ENCODE measurements at regions of chr16 and their contacts with region 1.

Region 1: DNA sequence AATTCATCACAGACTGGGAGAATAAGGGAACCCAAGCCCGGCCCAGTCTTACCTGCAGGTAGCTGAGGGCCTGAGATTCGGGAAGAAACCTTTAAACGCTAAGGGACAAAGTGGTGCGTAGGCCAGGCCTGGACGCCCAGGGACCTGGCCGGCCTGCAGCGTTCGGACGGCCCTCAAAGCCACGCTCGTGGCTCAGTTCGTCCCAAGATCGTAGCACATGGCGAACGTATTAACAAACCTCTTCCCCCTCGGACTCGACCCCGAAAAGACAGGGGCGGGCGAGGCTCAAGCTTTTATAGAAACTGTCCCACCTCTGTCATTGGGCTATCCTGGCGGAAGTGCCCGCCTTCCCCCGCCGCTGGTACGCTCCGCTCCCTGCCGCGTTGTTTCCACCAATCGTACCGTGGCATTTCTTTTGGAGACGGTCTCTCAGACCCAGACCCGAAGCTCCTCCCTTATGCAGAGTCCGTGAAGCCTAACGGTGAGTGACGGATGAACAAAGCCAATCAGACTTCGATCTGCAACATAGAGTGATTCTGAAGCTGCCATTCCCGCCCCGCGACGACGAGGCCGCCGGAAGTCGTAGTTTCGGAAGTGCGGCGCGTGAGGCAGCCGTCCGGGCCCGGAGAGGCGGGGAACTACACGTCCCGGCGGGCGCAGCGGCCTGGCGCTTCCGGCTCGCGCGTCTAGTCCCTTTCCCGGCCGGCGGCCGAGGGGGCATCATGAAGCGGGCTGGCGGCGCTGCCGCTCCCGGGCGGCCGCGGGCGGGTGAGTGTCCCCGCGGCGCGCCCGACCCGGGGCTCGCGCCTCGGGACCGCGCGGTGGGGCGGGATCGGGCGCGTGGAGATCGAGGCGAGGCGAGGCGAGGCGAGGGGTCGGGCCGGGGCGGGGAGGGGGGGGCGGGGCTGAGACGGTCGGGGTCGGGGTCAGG is at the start of gene TRAF7:
- DNase-seq: peak; percentile 93 to 100 (median 96)
- ATAC-seq: peak; percentile 91
- H3K4me3 ChIP-seq: peak within 1 kb of the TSS; percentile 69 to 95
- H3K4me3 Mint-ChIP-seq: peak within 1 kb of the TSS; percentile 93
- H3K27ac ChIP-seq: peak within 1 kb of the TSS; percentile 79 to 82
- H3K27ac Mint-ChIP-seq: peak within 1 kb of the TSS; percentile 87
- H3K4me1 ChIP-seq: peaks cover 66% of the 10 kb centered on the region
- H3K4me1 Mint-ChIP-seq: peaks cover 60% of the 10 kb centered on the region
- H3K27me3 ChIP-seq: peaks cover 0 to 2% of the 10 kb centered on the region in 2 experiments
- H3K27me3 Mint-ChIP-seq: no peaks in the 10 kb centered on the region
- CTCF ChIP-seq: no peak
- total RNA-seq, gene TRAF7: 21.4 to 21.8 TPM

Region 2: DNA sequence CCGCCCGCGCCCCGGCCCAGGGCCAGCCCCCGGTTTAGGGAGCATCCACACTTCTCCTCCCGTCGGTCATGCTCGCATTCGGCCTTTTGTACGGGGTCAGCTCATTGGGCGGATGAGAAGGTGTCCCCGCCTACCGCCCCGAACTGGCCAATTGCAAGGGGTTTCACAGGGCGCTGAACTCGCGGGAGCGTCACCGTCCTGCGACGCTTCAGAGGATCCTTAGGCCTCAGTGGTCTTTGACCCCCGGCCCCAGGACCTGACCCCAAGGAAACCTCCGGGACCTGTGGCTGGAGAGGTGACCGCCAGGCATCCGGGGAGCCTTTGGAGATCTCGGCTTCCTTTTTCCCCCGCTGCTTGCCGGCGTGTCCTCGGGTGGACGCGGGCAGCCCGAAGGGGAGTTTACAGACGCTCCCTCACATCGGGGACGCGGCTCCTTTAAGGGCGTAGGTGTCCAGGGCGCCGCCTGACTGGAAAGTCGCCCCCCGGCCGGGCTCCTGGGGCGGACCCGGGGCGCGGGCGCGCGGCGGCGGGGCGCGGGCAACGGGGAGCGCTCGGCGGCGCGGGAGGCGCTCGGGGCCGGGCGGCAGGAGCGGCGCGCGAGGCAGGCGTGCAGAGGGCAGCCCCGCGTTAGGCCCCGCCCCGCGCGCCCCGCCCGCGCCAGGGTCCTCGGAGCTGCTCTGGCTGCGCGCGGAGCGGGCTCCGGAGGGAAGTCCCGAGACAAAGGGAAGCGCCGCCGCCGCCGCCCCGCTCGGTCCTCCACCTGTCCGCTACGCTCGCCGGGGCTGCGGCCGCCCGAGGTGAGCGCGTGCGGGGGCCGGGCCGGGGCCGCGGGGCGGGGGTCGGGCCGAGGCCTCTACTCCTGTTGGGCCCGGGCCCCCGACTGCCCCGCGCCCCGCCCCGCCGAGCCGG is 846.1 kb before region 1 on chr16 and contains the start of gene UBE2I:
- CTCF ChIA-PET with region 1: no interaction called
- POLR2A ChIA-PET with region 1: no interaction called
- intact Hi-C with region 1: loop called in 1 of 2 experiments (anchors 2 kb)
- DNase-seq: peak; percentile 96 to 99 (median 98)
- ATAC-seq: peak; percentile 73
- H3K4me3 ChIP-seq: peak within 1 kb of the TSS; percentile 82 to 95
- H3K4me3 Mint-ChIP-seq: peak within 1 kb of the TSS; percentile 92
- H3K27ac ChIP-seq: peak within 1 kb of the TSS; percentile 100
- H3K27ac Mint-ChIP-seq: peak within 1 kb of the TSS; percentile 100
- H3K4me1 ChIP-seq: peaks cover 50% of the 10 kb centered on the region
- H3K4me1 Mint-ChIP-seq: peaks cover 41% of the 10 kb centered on the region
- H3K27me3 ChIP-seq: no peaks in the 10 kb centered on the region
- H3K27me3 Mint-ChIP-seq: no peaks in the 10 kb centered on the region
- CTCF ChIP-seq: no peak
- total RNA-seq, gene UBE2I: 285 to 294 TPM

Region 3: DNA sequence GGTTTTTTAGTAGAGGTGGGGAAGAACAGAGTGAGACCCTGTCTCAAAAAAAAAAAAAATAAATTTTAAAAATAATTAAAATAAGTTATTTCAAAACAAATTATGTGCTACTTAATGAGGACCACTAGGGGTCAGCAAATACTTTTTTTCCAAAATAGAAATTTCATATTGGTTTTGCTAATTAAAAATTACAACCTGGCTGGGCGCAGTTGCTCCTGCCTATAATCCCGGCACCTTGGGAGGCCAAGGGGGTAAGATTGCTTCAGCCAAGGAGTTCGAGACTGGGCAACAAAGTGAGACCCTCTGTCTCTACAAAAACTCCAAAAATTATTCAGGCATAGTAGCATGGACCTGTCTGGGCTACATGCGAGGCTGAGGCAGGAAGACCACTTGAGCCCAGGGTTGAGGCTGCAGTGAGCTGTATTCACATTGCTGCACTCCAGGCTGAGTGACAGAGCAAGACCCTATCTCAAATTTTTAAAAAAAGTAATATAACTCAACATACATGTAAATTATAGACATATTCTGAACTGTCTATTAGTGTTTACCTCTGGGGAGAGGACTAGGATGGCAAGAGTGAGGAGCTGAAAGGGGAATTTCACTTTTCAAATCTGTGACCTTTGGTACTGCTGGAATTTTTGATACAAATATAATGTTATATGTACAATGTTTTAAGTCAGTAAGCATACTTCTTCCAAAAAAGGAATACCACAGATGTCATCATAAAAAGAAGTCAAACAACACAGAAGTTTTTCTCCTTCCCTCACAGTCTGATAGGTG is 291.5 kb before region 1 on chr16:
- CTCF ChIA-PET with region 1: no interaction called
- POLR2A ChIA-PET with region 1: no interaction called
- intact Hi-C with region 1: loop called in 1 of 2 experiments (anchors 5 kb)
- DNase-seq: peak in 2 of 9 experiments; percentile 51 to 70
- ATAC-seq: peak; percentile 34
- H3K4me3 ChIP-seq: no peak overlapping the region
- H3K4me3 Mint-ChIP-seq: no peak overlapping the region
- H3K27ac ChIP-seq: no peak overlapping the region
- H3K27ac Mint-ChIP-seq: no peak overlapping the region
- H3K4me1 ChIP-seq: no peaks in the 10 kb centered on the region
- H3K4me1 Mint-ChIP-seq: no peaks in the 10 kb centered on the region
- H3K27me3 ChIP-seq: peaks cover 2 to 8% of the 10 kb centered on the region in 2 experiments
- H3K27me3 Mint-ChIP-seq: peaks cover 11% of the 10 kb centered on the region
- CTCF ChIP-seq: peak; percentile 81

Region 4: DNA sequence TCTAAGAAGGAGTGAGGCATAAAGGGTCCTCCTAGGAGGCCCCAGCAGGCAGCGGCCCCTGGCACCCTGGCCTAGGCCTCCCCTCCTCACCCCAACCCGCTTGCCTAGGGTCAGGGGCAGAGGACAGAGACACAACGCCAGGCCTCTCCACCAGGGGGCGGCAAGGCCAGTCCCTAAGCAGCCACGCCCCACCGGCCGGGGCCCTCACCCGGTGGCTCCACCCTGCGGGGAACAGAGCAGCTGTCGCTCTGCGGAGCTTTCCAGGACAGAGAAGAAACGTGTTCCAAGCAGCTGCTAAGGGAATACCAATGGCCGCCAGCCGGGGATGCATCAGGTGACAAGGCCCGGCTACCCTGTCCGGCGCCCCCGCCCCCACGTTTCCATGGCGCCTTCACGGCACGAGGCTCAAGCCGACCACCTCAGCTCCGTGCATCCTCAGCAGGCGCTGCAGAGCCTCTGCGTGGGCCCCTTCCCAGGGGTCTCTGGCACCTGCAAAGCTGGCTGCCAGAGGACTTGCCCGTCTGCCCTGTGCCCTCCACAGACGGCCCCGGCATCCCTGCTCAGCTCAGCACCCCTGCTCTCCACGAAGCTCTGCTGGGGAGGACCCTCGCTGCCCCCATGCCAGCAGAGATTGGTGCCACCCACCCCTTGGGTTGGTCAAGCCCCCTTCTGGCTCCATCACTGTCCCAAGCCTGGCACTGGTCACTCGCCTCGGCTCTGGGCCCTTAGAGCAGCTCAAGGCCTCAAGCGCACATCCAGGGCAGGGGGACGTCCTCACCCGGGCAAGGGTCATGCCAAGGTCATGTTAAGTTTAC is 151.3 kb before region 1 on chr16:
- CTCF ChIA-PET with region 1: interaction called, 7 read pairs
- POLR2A ChIA-PET with region 1: interaction called, 18 read pairs
- intact Hi-C with region 1: loop called in 1 of 2 experiments (anchors 1 kb)
- DNase-seq: peak; percentile 69 to 91 (median 86)
- ATAC-seq: peak; percentile 98
- H3K4me3 ChIP-seq: no peak overlapping the region
- H3K4me3 Mint-ChIP-seq: no peak overlapping the region
- H3K27ac ChIP-seq: no peak overlapping the region
- H3K27ac Mint-ChIP-seq: no peak overlapping the region
- H3K4me1 ChIP-seq: peaks cover 50% of the 10 kb centered on the region
- H3K4me1 Mint-ChIP-seq: peaks cover 36% of the 10 kb centered on the region
- H3K27me3 ChIP-seq: no peaks in the 10 kb centered on the region
- H3K27me3 Mint-ChIP-seq: no peaks in the 10 kb centered on the region
- CTCF ChIP-seq: peak; percentile 67

Region 5: DNA sequence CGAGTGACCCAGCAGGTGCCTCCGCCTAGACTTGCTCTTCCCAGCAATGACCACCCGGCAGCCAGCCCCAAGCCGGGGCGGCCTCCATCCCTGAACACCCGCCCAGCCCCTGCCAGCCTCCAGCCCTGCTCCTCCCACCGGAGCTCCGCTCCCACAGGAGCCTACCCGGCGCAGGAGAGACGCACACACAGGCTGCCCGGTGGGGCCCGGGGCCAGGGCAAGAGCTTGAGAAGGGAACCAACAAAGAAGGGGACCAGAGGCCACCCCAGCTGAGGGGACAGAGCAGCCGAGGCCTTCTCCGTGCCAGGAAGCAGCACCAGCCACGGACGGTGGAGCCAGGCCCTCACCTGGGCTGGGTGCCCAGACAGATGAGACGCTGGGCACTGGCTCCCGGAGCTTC is 33.5 kb before region 1 on chr16:
- CTCF ChIA-PET with region 1: interaction called, 5 read pairs
- POLR2A ChIA-PET with region 1: no interaction called
- intact Hi-C with region 1: loop called in 1 of 2 experiments (anchors 1 kb)
- DNase-seq: no peak
- ATAC-seq: no peak
- H3K4me3 ChIP-seq: no peak overlapping the region
- H3K4me3 Mint-ChIP-seq: no peak overlapping the region
- H3K27ac ChIP-seq: no peak overlapping the region
- H3K27ac Mint-ChIP-seq: no peak overlapping the region
- H3K4me1 ChIP-seq: no peaks in the 10 kb centered on the region
- H3K4me1 Mint-ChIP-seq: peaks cover 8% of the 10 kb centered on the region
- H3K27me3 ChIP-seq: no peaks in the 10 kb centered on the region
- H3K27me3 Mint-ChIP-seq: no peaks in the 10 kb centered on the region
- CTCF ChIP-seq: no peak

Region 6: DNA sequence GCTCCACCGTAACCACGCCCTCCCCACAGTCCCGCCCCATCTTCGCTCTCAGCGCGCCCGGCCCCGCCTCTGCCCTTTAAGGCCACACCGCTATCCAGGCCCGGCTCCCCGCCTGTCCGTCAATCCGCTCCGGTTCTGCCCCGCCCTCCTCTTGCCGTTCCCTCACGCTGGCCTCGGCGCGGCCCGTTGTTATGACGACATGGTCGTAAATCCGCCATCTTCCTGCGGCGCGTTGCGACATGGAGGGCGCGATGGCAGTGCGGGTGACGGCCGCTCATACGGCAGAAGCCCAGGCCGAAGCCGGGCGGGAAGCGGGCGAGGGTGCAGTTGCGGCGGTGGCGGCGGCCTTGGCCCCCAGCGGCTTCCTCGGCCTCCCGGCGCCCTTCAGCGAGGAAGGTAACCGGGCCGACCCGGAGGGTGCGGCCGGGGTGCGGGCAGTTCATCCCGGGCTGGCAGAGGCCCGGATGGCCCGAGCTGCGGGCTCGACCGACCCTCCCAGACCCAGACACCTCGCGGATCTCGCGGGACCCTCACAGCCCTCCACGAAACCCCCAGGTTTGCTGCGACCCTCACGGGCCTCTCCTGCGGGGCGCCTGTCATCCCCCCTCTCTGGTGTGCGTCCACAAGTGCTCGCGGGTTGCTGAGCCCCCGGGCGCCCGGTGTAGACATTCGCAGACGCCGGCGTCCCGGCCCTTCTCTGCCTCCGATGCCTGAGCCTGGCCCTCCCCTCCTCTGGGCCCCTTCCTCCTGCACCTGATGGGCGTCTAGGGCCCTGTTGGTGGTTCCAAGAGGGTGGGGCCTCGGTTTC is 68.2 kb after region 1 on chr16 and contains the start of gene E4F1:
- CTCF ChIA-PET with region 1: no interaction called
- POLR2A ChIA-PET with region 1: no interaction called
- intact Hi-C with region 1: loop called (anchors 1 kb)
- DNase-seq: peak; percentile 97 to 100 (median 99)
- ATAC-seq: peak; percentile 96
- H3K4me3 ChIP-seq: peak within 1 kb of the TSS; percentile 81 to 88
- H3K4me3 Mint-ChIP-seq: peak within 1 kb of the TSS; percentile 94
- H3K27ac ChIP-seq: peak within 1 kb of the TSS; percentile 67 to 76
- H3K27ac Mint-ChIP-seq: peak within 1 kb of the TSS; percentile 85
- H3K4me1 ChIP-seq: peaks cover 13% of the 10 kb centered on the region
- H3K4me1 Mint-ChIP-seq: peaks cover 22% of the 10 kb centered on the region
- H3K27me3 ChIP-seq: no peaks in the 10 kb centered on the region
- H3K27me3 Mint-ChIP-seq: no peaks in the 10 kb centered on the region
- CTCF ChIP-seq: no peak
- total RNA-seq, gene E4F1: 36.3 to 37.5 TPM

Region 7: GRCh38 chr16:2420035-2420434 is 264.7 kb after region 1 on chr16:
- CTCF ChIA-PET with region 1: no interaction called
- POLR2A ChIA-PET with region 1: no interaction called
- intact Hi-C with region 1: no loop called
- DNase-seq: no peak
- ATAC-seq: no peak
- H3K4me3 ChIP-seq: no peak overlapping the region
- H3K4me3 Mint-ChIP-seq: no peak overlapping the region
- H3K27ac ChIP-seq: no peak overlapping the region
- H3K27ac Mint-ChIP-seq: no peak overlapping the region
- H3K4me1 ChIP-seq: peaks cover 6% of the 10 kb centered on the region
- H3K4me1 Mint-ChIP-seq: peaks cover 10% of the 10 kb centered on the region
- H3K27me3 ChIP-seq: no peaks in the 10 kb centered on the region
- H3K27me3 Mint-ChIP-seq: peaks cover 7% of the 10 kb centered on the region
- CTCF ChIP-seq: no peak

Region 8: GRCh38 chr16:2531767-2532493 is 376.6 kb after region 1 on chr16:
- CTCF ChIA-PET with region 1: no interaction called
- POLR2A ChIA-PET with region 1: interaction called, 16 read pairs
- intact Hi-C with region 1: no loop called
- DNase-seq: peak; percentile 93 to 98 (median 97)
- ATAC-seq: peak; percentile 87
- H3K4me3 ChIP-seq: peak overlapping the region; percentile 75 to 92
- H3K4me3 Mint-ChIP-seq: peak overlapping the region; percentile 98
- H3K27ac ChIP-seq: peak overlapping the region; percentile 91 to 99
- H3K27ac Mint-ChIP-seq: peak overlapping the region; percentile 100
- H3K4me1 ChIP-seq: peaks cover 13% of the 10 kb centered on the region
- H3K4me1 Mint-ChIP-seq: peaks cover 20% of the 10 kb centered on the region
- H3K27me3 ChIP-seq: no peaks in the 10 kb centered on the region
- H3K27me3 Mint-ChIP-seq: no peaks in the 10 kb centered on the region
- CTCF ChIP-seq: no peak